Mucosa of descending colon (tissue), 3 donors: ENCODE measurements at regions of chr19 and their contacts with region 1.

Region 1: GRCh38 chr19:40221858-40222837 is 4.0 kb upstream of the TTC9B start:
- DNase-seq: peak in 2 of 3 donors; percentile 76 to 79
- ATAC-seq: peak; percentile 79
- H3K4me3 ChIP-seq: no peak overlapping the region
- H3K4me1 ChIP-seq: peaks cover 9% of the 10 kb centered on the region
- CTCF ChIP-seq: peak; percentile 54

Region 2: DNA sequence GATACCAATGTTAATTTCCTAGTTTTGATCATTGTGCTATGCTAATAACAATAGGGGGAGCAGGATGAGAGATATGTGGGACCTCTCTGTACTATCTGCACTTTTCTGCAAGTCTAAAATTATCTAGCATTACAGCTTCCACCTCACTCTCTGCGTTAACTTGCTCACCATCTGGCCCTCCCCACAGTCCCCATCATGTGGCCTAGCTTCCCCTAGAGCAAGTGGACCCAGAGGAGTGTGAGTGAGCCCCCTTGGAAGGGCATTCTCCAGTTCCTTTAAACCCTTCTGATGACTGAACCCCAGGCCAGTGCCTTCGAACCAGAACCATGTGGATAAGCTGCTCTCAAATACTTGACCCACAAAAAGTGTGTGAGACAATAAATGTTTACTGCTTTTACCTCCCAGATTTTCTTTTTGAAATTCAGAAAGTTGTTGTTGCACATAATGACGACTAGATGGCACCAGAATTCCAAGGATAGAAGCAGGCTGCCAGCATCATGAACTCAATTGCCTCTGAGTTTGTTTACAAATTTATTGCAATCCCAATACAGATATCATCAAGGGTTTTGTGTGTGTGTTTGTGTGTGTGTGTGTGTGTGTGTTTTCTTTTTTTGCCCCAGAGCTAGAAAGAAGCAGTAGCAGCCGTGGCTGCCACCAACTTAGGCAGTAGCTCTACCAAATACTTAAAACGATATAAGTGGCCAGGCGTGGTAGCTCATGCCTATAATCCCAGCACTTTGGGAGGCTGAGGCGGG is 82.4 kb before region 1 on chr19:
- intact Hi-C with region 1: loop called (anchors 5 to 10 kb)
- DNase-seq: peak in 1 of 3 donors; percentile 13
- ATAC-seq: peak; percentile 64
- H3K4me3 ChIP-seq: no peak overlapping the region
- H3K4me1 ChIP-seq: no peaks in the 10 kb centered on the region
- CTCF ChIP-seq: no peak